Breast epithelium (tissue), 4 donors: ENCODE measurements at regions of chr17 and their contacts with region 1.

Region 1: DNA sequence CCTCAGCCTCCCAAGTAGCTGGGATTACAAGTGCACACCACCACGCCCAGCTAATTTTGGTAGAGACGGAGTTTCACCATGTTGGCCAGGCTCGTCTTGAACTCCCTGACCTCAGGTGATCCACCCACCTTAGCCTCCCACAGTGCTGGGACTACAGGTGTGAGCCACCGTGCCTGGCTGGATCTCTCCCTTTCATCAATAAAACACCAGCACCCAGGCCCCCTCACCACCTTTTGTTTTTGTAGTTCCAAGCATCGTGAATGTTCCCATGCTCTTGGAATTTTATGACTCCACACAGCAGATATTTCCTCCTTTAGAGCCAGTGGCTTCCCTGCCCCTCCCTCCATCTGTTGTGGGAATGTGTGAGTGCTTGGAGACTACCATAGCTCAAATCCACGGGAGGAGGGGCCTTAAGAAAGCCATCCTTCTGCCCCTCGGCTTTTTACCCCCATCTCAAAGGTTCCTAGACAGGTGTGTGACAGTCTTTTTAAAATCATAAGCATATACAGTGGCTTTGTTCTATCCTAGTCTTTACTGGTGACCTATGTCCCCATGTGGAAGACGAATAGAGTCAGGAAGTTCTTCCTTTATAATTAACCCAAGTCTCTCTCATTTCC is 47.1 kb downstream of the YPEL2 start:
- DNase-seq: no peak
- H3K4me3 ChIP-seq: no peak overlapping the region
- H3K27ac ChIP-seq: peak overlapping the region; percentile 33 to 64
- H3K4me1 ChIP-seq: peaks cover 3 to 6% of the 10 kb centered on the region in 2 donors
- H3K27me3 ChIP-seq: no peaks in the 10 kb centered on the region
- CTCF ChIP-seq: no peak
- POLR2A ChIP-seq: no peak

Region 2: DNA sequence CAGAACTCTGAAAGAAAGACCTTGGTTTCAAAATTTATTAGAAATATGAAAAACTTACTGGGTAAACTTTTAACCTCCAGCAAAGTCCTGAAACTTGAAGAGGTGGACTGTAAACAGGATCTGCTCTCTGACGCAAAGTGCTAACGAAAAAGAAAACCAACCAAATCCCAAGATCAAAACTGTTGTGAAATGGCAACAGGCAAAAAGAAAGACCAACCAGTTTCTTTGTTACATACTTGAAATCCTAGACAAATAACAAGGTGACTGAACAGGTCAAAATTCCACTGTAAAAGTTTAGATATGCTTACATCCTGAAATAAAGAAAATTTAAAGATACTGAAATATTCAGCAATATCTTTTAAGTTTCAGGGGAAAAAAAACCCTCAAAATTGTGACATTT is 316.1 kb before region 1 on chr17:
- intact Hi-C with region 1: no loop called
- DNase-seq: no peak
- H3K4me3 ChIP-seq: no peak overlapping the region
- H3K27ac ChIP-seq: no peak overlapping the region
- H3K4me1 ChIP-seq: no peaks in the 10 kb centered on the region
- H3K27me3 ChIP-seq: no peaks in the 10 kb centered on the region
- CTCF ChIP-seq: no peak
- POLR2A ChIP-seq: no peak

Region 3: GRCh38 chr17:60149691-60150582 is 771.4 kb after region 1 on chr17 and contains the start of gene CA4:
- intact Hi-C with region 1: loop called (anchors 5 kb)
- DNase-seq: no peak
- H3K4me3 ChIP-seq: peak within 1 kb of the TSS; percentile 31 to 66 (median 35)
- H3K27ac ChIP-seq: no peak within 1 kb of the TSS
- H3K4me1 ChIP-seq: no peaks in the 10 kb centered on the region
- H3K27me3 ChIP-seq: peaks cover 7 to 62% of the 10 kb centered on the region in 2 donors
- CTCF ChIP-seq: no peak
- POLR2A ChIP-seq: no peak
- total RNA-seq, gene CA4: 4.7 to 46.5 (median 12.3) TPM